ENCODE measurements at regions of chr6 and their contacts with region 1.

Region 1: GRCh38 chr6:166598441-166599138 is 12.1 kb upstream of the RAMACL start:
- DNase-seq: peak; percentile 98
- H3K4me3 ChIP-seq: peak overlapping the region in 1 of 3 experiments; percentile 12
- H3K27ac ChIP-seq: peak overlapping the region; percentile 98
- H3K4me1 ChIP-seq: peaks cover 42% of the 10 kb centered on the region
- H3K27me3 ChIP-seq: no peaks in the 10 kb centered on the region
- CTCF ChIP-seq: no peak
- POLR2A ChIP-seq: peak; percentile 89

Region 2: GRCh38 chr6:166488076-166488685 is 110.4 kb before region 1 on chr6:
- CTCF ChIA-PET with region 1: interaction called, 3 read pairs
- POLR2A ChIA-PET with region 1: no interaction called
- dilution Hi-C with region 1: no loop called
- intact Hi-C with region 1: loop called (anchors 1 kb)
- DNase-seq: peak; percentile 99
- H3K4me3 ChIP-seq: no peak overlapping the region
- H3K27ac ChIP-seq: peak overlapping the region; percentile 92
- H3K4me1 ChIP-seq: peaks cover 49% of the 10 kb centered on the region
- H3K27me3 ChIP-seq: no peaks in the 10 kb centered on the region
- CTCF ChIP-seq: no peak
- POLR2A ChIP-seq: peak; percentile 77

Region 3: DNA sequence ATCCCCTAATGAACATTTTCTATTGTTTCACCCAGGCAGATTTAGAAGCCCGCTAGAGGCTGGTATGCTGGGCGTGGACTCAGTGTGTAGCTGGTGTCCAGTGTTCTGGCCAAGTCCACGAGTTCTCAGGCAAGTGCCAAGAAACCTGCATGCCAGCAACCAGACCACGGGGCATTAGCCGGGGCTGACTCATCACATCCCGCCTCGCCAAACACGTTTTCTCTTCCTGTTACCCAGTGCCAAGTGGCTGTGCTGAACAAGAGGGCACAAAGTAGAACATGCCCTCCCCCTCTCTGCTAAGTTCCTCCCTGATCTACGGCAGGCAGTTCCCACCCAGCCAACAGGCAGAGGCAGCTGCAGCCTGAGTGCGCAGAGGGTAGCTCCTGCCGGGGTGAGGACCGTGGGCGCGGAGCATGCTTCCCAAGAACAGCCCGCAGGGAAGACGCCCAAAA is 41.7 kb before region 1 on chr6:
- CTCF ChIA-PET with region 1: interaction called, 9 read pairs
- POLR2A ChIA-PET with region 1: no interaction called
- dilution Hi-C with region 1: no loop called
- intact Hi-C with region 1: loop called (anchors 1 kb)
- DNase-seq: peak; percentile 100
- H3K4me3 ChIP-seq: no peak overlapping the region
- H3K27ac ChIP-seq: peak overlapping the region; percentile 92
- H3K4me1 ChIP-seq: peaks cover 27% of the 10 kb centered on the region
- H3K27me3 ChIP-seq: no peaks in the 10 kb centered on the region
- CTCF ChIP-seq: no peak
- POLR2A ChIP-seq: no peak

Region 4: DNA sequence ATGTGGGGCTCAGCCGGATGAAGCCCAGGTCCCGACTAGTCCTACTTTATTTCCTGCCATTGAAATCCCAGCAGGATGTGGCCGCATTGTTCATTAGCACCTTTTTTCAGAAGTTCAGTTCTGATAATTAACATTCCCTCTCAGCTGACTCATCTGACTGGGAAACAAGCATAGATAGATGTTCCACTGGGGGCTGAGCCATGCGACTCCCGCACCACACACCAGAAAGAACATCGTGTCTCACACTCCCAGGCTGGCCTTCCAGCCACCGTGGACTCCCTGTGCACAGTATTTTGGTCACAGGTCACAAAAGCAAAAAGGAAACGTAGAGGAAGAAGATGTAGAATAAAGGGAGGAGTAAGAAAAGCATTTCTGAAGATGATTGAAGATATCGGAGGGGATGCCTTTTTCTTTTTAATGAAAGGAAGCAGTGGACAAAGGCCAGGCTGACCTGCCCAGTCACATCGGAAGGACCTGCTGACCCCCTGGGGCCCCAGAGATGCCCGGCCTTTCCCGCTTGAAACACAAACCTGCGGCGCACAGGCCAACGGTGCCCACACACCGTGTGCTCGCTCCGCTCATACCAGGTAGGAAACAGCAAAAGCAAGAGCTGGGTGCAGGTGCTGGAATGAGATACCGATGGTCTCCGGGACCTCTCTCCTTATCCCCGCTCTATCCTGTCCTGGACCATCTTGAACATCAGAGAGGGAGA is 16.6 kb after region 1 on chr6:
- CTCF ChIA-PET with region 1: interaction called, 5 read pairs
- POLR2A ChIA-PET with region 1: interaction called, 3 read pairs
- dilution Hi-C with region 1: no loop called
- intact Hi-C with region 1: loop called (anchors 1 kb)
- DNase-seq: peak; percentile 86
- H3K4me3 ChIP-seq: no peak overlapping the region
- H3K27ac ChIP-seq: peak overlapping the region; percentile 58
- H3K4me1 ChIP-seq: peaks cover 40% of the 10 kb centered on the region
- H3K27me3 ChIP-seq: no peaks in the 10 kb centered on the region
- CTCF ChIP-seq: no peak
- POLR2A ChIP-seq: no peak

Region 5: DNA sequence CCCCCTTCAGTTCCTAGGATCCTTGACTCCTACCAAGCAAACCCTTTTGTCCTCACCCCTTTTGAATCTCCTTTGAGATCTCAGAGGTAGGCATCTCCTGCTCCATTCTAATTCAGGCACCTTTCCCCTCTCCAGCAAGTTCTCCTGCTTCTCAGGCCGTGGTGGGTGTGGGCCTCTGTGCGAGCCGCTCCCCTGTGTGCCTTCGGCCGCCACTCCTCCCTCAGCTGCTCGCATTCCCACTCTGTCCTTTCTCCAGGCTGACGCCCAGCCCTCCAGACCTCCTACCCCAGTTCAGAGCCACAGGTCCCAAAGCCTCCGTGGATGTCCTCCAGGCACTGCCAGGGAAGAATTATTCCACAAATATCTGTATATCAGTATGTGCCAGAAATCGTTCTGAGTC is 48.1 kb after region 1 on chr6:
- CTCF ChIA-PET with region 1: no interaction called
- POLR2A ChIA-PET with region 1: no interaction called
- dilution Hi-C with region 1: no loop called
- intact Hi-C with region 1: no loop called
- DNase-seq: no peak
- H3K4me3 ChIP-seq: no peak overlapping the region
- H3K27ac ChIP-seq: no peak overlapping the region
- H3K4me1 ChIP-seq: peaks cover 11% of the 10 kb centered on the region
- H3K27me3 ChIP-seq: no peaks in the 10 kb centered on the region
- CTCF ChIP-seq: no peak
- POLR2A ChIP-seq: no peak

Region 6: GRCh38 chr6:166691199-166691598 is 92.6 kb after region 1 on chr6:
- CTCF ChIA-PET with region 1: no interaction called
- POLR2A ChIA-PET with region 1: interaction called, 3 read pairs
- dilution Hi-C with region 1: no loop called
- intact Hi-C with region 1: loop called (anchors 1 kb)
- DNase-seq: peak; percentile 88
- H3K4me3 ChIP-seq: no peak overlapping the region
- H3K27ac ChIP-seq: peak overlapping the region; percentile 68
- H3K4me1 ChIP-seq: peaks cover 20% of the 10 kb centered on the region
- H3K27me3 ChIP-seq: no peaks in the 10 kb centered on the region
- CTCF ChIP-seq: no peak
- POLR2A ChIP-seq: no peak

Region 7: DNA sequence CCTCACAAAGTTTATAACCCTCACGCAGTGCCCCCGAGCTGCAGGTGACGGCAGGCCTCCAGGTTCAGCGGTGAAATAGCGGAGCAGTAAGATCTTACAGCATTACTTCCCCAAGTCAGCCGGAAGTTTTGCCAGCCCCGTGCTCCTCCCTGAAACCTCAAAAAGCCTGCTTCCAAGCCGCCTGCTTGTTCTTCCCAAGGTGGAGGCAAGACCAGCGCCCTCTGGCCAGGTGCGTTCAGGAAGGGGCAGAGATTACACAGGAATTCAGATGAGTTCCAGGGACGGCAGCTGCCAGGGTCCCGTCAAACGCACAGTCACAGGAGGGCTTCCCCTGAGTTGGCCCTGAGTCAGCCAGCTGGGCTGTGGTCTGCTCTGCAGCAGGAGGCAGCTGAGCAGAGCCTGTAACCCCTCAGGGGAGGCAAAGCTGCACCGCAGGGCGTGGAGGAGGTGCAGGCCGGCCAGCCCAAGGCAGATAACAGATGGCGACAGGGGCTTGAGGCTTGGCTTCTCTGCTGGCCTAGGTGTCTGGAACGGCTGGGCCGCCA is 152.5 kb after region 1 on chr6:
- CTCF ChIA-PET with region 1: no interaction called
- POLR2A ChIA-PET with region 1: no interaction called
- dilution Hi-C with region 1: no loop called
- intact Hi-C with region 1: no loop called
- DNase-seq: no peak
- H3K4me3 ChIP-seq: no peak overlapping the region
- H3K27ac ChIP-seq: no peak overlapping the region
- H3K4me1 ChIP-seq: no peaks in the 10 kb centered on the region
- H3K27me3 ChIP-seq: peaks cover 0 to 1% of the 10 kb centered on the region in 2 experiments
- CTCF ChIP-seq: no peak
- POLR2A ChIP-seq: no peak